ENCODE measurements at regions of chr20 and their contacts with region 1.

Region 1: DNA sequence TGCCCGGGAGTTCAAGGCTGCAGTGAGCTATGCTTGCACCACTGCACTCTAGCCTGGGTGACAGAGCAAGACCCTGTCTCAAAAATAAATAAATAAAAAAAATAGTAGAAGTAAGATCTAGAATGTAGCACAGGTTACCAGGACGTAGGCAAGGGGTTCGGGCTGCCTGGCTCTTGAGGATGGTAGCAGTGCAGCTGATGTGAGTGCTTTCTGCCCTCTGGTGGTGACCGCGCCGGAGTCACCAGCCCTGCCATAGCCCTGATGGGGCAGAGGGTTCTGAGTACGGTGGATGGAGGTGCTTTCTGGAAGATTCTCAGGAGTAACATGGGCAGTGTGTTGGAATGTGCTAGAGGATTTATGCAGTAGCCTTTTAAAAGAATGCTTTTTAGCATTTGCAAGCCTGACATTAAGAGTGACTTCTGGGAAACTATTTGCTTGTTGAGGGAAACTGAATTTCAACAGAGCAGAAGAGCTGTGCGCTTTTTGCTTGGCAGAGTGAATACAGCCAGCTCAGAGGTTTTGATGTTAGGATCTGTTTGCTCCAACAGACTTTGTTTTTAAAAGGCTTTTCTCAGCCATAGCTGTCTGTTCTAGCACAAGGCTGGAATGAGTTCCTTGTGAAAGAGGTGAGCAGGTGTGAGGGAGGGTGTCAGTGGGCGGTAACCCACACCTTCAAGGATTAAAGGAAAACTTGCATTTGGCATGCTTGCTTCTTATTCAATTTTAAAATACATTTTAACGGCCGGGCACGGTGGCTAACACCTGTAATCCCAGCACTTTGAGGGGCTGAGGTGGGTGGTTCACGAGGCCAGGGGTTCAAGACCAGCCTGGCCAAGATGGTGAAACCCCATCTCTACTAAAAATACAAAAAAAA is 65.9 kb downstream of the PTPN1 start:
- DNase-seq: peak; percentile 70 to 80 (median 74)
- H3K4me3 ChIP-seq: no peak overlapping the region
- H3K27ac ChIP-seq: no peak overlapping the region
- H3K4me1 ChIP-seq: peaks cover 12% of the 10 kb centered on the region
- H3K27me3 ChIP-seq: no peaks in the 10 kb centered on the region
- CTCF ChIP-seq: peak; percentile 45 to 71 (median 47)
- EP300 ChIP-seq: no peak
- POLR2A ChIP-seq: no peak

Region 2: GRCh38 chr20:50353289-50353961 is 222.7 kb before region 1 on chr20:
- intact Hi-C with region 1: no loop called
- DNase-seq: no peak
- H3K4me3 ChIP-seq: no peak overlapping the region
- H3K27ac ChIP-seq: no peak overlapping the region
- H3K4me1 ChIP-seq: no peaks in the 10 kb centered on the region
- H3K27me3 ChIP-seq: no peaks in the 10 kb centered on the region
- CTCF ChIP-seq: no peak
- EP300 ChIP-seq: no peak
- POLR2A ChIP-seq: no peak

Region 3: DNA sequence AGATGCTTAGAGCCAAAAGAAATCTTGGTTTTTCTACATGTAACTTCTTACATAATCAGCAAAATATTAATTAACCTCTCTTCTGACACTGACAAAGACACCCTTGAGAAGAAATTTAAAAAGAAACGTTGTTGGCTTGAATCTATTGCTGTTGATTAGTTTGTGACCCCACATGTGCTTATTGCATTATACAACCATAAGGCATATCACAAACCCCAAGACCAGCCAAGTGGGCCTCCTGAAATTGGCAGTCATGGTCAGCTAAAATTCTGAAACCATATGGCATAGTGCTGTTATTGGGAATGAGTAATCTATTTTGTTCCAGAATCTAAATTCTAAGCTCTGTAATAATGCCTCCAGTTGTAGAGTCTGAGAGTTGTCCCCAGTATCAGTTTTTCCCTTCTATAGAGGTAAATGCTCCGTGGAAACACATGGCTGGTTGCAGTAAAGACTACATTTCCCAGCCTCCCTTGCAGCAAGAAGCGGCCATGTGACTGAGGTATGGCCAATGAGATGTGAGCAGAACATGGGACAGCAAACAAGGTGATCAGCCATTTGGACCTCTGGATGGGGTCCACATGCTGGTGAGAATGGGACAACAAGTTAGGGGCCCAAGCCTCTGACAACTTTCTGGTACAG is 108.2 kb before region 1 on chr20:
- intact Hi-C with region 1: loop called in 2 of 4 experiments (anchors 5 to 10 kb)
- DNase-seq: peak in 2 of 5 donors; percentile 45 to 47
- H3K4me3 ChIP-seq: no peak overlapping the region
- H3K27ac ChIP-seq: no peak overlapping the region
- H3K4me1 ChIP-seq: peaks cover 6% of the 10 kb centered on the region
- H3K27me3 ChIP-seq: no peaks in the 10 kb centered on the region
- CTCF ChIP-seq: no peak
- EP300 ChIP-seq: no peak
- POLR2A ChIP-seq: no peak

Region 4: GRCh38 chr20:50478162-50479036 is 97.7 kb before region 1 on chr20:
- intact Hi-C with region 1: loop called in 3 of 4 experiments (anchors 5 to 10 kb)
- DNase-seq: peak in 4 of 5 donors; percentile 27 to 50 (median 39)
- H3K4me3 ChIP-seq: no peak overlapping the region
- H3K27ac ChIP-seq: no peak overlapping the region
- H3K4me1 ChIP-seq: peaks cover under 1% of the 10 kb centered on the region
- H3K27me3 ChIP-seq: no peaks in the 10 kb centered on the region
- CTCF ChIP-seq: peak in 1 of 3 donors; percentile 15
- EP300 ChIP-seq: no peak
- POLR2A ChIP-seq: no peak

Region 5: GRCh38 chr20:50484276-50484976 is 91.7 kb before region 1 on chr20:
- intact Hi-C with region 1: loop called in 3 of 4 experiments (anchors 5 to 10 kb)
- DNase-seq: no peak
- H3K4me3 ChIP-seq: peak overlapping the region; percentile 35
- H3K27ac ChIP-seq: no peak overlapping the region
- H3K4me1 ChIP-seq: no peaks in the 10 kb centered on the region
- H3K27me3 ChIP-seq: no peaks in the 10 kb centered on the region
- CTCF ChIP-seq: no peak
- EP300 ChIP-seq: no peak
- POLR2A ChIP-seq: no peak

Region 6: GRCh38 chr20:50509935-50510705 is 66.0 kb before region 1 on chr20 and contains the start of gene PTPN1:
- intact Hi-C with region 1: loop called in 1 of 4 experiments (anchors 10 kb)
- DNase-seq: peak; percentile 99 to 100 (median 99)
- H3K4me3 ChIP-seq: peak within 1 kb of the TSS; percentile 100
- H3K27ac ChIP-seq: peak within 1 kb of the TSS; percentile 10 to 88
- H3K4me1 ChIP-seq: peaks cover 9% of the 10 kb centered on the region
- H3K27me3 ChIP-seq: no peaks in the 10 kb centered on the region
- CTCF ChIP-seq: peak in 1 of 3 donors; percentile 46
- EP300 ChIP-seq: no peak
- POLR2A ChIP-seq: peak; percentile 98
- total RNA-seq, gene PTPN1: 17.6 to 31.1 (median 26.6) TPM

Region 7: DNA sequence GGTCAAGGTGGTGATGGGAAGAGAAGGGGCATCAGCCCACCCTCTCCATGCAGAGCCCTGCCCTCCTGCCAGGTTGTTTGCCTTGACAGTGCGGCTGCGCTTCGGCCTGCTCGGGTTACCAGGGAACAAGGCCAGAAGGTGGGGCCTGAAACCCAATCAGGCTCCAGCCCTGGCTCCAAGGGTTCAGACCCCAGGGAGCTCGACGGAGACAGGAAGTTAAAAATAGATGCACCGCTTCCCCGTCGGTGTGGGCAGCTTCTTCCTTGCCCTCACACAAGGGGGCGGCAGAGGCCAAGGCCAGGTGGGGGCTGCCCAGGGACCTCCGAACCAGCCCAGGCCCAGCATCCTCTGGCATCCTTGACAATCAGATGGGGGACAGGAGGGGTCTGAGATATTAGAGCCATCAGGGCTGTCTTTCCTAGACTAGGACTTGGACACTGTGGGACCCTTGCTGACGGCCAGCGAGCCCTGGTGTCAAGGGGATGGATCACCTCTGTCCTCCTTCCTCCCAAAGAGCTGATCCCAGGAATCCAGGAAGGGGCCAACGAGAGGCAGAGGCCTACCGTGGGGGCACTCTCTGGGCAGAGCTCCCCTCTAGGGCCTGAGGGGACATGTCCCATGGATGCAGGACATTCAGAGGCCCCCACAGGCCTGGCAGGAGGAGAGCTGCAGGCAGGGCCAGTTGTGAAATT is 50.0 kb after region 1 on chr20:
- intact Hi-C with region 1: no loop called
- DNase-seq: peak; percentile 73 to 84 (median 75)
- H3K4me3 ChIP-seq: no peak overlapping the region
- H3K27ac ChIP-seq: peak overlapping the region in 1 of 2 donors; percentile 40
- H3K4me1 ChIP-seq: peaks cover 7% of the 10 kb centered on the region
- H3K27me3 ChIP-seq: no peaks in the 10 kb centered on the region
- CTCF ChIP-seq: peak; percentile 33 to 66 (median 66)
- EP300 ChIP-seq: no peak
- POLR2A ChIP-seq: no peak

Measured in ovary (tissue), 10 donors.